PC-3 (cell line): ENCODE measurements at regions of chr5 and their contacts with region 1.

Region 1: DNA sequence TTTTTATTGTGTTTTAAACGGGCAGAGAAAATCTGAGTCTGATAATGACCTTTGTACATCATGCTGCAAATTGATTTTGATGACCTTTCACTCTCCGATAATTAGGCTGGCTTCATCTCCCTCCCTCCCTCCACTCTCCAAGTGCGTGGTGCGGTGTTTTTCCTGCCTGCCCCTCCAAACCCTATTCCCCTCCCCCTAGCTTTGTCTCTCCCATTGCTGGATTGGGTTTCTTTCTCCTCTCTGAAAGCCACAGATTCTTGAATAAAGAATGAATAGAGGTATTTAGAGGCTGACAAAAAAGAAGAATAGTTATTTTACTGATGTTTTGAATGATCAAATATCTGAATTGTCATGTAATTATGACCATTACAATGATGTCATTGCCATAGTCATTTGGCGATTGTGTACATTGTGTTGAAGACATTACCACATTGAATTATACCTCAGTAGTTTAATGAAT is 571.1 kb upstream of the ZNF608 start:
- DNase-seq: no peak
- ATAC-seq: 0 out of 2 replicates have a peak, but pooled peaks have one; percentile 15
- H3K4me3 ChIP-seq: no peak overlapping the region; the same call in 1 of the 2 replicates
- H3K27ac ChIP-seq: no peak overlapping the region
- H3K4me1 ChIP-seq: peaks cover 6% of the 10 kb centered on the region; the same call in 1 of the 2 replicates
- H3K27me3 ChIP-seq: no peaks in the 10 kb centered on the region
- CTCF ChIP-seq: no peak

Region 2: DNA sequence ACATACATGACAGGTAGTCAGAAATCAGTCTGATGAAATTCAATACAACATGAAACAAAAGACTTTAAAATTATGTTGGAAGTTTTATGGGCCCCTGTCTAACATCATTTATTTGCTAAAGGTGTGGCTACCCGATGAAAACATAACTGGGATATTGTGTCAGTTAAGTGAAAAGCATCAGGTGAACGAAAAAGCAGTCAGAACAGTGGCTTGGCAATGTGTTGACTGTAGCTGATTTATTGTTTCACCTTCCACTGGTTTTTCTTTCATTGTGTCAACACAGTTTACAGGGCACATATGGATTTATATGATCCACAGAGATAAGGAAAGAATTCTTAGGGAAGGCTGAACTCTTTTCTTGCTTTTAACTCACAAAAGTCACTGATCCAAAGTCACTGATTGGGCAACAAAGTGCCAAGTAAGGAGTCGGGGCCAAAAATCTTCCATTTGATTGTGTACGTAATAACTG is 141.5 kb before region 1 on chr5:
- CTCF ChIA-PET with region 1: no interaction called
- POLR2A ChIA-PET with region 1: no interaction called
- intact Hi-C with region 1: loop called (anchors 1 kb)
- DNase-seq: peak; percentile 87
- ATAC-seq: peak; percentile 94
- H3K4me3 ChIP-seq: no peak overlapping the region
- H3K27ac ChIP-seq: peak overlapping the region; percentile 79
- H3K4me1 ChIP-seq: peaks cover 21% of the 10 kb centered on the region
- H3K27me3 ChIP-seq: no peaks in the 10 kb centered on the region
- CTCF ChIP-seq: no peak